ENCODE measurements at regions of chr2 and their contacts with region 1.

Region 1: DNA sequence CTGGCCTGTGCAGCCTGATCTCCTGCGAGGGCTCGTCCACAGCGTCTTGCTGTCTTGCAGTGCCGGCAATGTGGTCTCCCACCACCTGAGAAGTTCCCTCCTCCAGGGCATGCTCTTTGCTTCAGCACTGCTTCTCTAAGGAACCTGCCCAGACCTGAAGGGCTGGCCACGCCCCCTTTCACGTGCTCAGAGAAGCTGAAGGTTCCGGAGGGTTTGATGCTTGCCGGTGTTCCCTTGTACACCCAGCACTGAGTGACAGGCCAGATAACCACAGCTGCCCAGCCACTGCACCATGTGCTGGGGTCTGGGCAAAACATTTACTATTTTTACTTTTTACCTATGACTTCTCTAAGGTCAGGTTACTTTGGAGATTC is 1.7 kb upstream of the POLR2D start:
- DNase-seq: peak; percentile 83
- H3K4me3 ChIP-seq: no peak overlapping the region
- H3K27ac ChIP-seq: peak overlapping the region in 1 of 2 donors; percentile 2
- H3K4me1 ChIP-seq: no peaks in the 10 kb centered on the region
- H3K27me3 ChIP-seq: no peaks in the 10 kb centered on the region
- CTCF ChIP-seq: no peak
- POLR2A ChIP-seq: no peak

Region 2: DNA sequence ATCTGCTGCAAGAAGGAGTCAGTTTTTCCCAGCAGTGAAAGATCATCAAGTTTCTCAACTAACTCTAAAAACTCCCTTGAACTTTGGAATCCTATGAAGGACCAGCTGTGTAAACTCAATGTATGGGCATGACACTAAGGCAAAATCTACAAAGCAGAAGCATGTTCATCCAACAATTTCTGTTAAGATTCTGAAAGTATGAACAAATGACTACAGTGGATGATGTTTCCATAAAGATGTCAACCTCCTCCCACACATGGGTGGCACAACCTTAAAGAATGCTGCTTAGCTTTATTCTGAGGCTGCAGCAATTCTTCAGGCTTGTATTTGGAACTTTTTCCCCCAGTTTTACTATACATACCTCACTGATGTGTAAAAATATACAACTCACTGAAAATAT is 95.9 kb before region 1 on chr2:
- intact Hi-C with region 1: no loop called
- DNase-seq: no peak
- H3K4me3 ChIP-seq: no peak overlapping the region
- H3K27ac ChIP-seq: no peak overlapping the region
- H3K4me1 ChIP-seq: no peaks in the 10 kb centered on the region
- H3K27me3 ChIP-seq: no peaks in the 10 kb centered on the region
- CTCF ChIP-seq: no peak
- POLR2A ChIP-seq: no peak

Region 3: DNA sequence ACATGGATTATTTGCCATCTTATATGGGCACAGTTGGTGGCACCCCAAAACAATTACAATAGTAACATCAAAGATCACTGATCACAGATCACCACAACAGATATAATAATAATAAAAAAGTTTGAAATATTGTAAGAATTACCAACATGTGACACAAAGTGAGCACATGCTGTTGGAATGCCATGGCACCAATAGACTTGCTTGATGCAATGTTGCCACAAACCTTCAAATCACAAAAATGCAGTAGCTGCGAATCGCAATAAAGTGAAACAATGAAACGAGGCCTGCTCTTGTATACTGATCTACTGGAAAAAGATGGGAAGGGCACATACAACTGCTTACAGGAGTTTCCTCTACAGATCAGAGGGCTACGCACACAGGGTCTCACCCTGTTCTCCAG is 58.2 kb after region 1 on chr2:
- intact Hi-C with region 1: no loop called
- DNase-seq: no peak
- H3K4me3 ChIP-seq: no peak overlapping the region
- H3K27ac ChIP-seq: no peak overlapping the region
- H3K4me1 ChIP-seq: no peaks in the 10 kb centered on the region
- H3K27me3 ChIP-seq: no peaks in the 10 kb centered on the region
- CTCF ChIP-seq: no peak
- POLR2A ChIP-seq: no peak

Region 4: GRCh38 chr2:128090945-128091725 is 231.4 kb after region 1 on chr2 and contains the start of gene UGGT1:
- intact Hi-C with region 1: loop called (anchors 10 kb)
- DNase-seq: peak; percentile 89
- H3K4me3 ChIP-seq: peak within 1 kb of the TSS; percentile 85 to 91
- H3K27ac ChIP-seq: peak within 1 kb of the TSS; percentile 70 to 81
- H3K4me1 ChIP-seq: peaks cover 6% of the 10 kb centered on the region
- H3K27me3 ChIP-seq: no peaks in the 10 kb centered on the region
- CTCF ChIP-seq: peak in 1 of 4 experiments; percentile 21
- POLR2A ChIP-seq: peak; percentile 56
- total RNA-seq, gene UGGT1: 34.7 to 45.2 TPM

Region 5: DNA sequence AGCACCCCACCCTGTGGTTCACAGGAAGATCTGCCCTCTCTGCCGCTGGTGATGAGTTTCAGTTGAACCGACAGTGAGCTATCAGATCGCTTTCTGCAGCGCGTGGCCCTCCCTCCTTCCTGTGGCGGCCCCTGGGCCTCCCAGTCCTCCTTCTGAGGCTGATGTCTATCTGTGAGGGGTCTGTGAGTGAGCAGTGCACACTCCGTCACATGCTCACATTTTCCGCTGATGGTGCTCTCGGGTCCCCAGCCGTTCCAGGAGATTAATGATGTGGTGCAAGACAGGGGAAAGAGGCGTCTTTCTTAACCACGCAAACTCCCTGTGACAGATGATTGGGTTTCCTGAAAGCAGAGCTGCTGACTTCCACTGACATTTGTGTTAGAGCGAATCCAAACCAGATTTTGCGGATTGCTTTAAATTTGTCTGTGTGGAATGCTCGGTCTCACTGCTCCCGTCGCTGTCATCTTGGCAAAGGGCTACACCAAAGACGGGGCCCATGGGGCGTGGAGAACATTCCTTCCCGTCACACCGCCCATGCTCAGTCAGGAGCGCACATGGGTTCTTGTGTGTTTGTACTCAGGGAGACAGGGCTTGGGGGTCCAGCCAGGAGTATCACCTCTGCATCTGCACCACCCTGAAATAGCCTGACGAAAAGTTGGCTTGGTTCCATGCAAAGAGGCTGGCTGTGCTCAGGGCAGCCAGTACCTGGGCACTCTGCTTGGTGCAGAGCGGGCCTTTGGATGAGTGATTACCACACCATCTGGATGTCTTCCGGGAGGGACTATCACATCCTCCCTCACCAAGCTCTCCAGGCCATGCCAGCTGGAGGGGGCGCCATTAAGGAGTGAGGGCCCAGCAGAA is 613.7 kb after region 1 on chr2:
- intact Hi-C with region 1: no loop called
- DNase-seq: peak; percentile 42
- H3K4me3 ChIP-seq: no peak overlapping the region
- H3K27ac ChIP-seq: no peak overlapping the region
- H3K4me1 ChIP-seq: no peaks in the 10 kb centered on the region
- H3K27me3 ChIP-seq: no peaks in the 10 kb centered on the region
- CTCF ChIP-seq: no peak
- POLR2A ChIP-seq: no peak

Measured in prostate gland (tissue), 2 donors.